SK-N-SH (cell line): ENCODE measurements at regions of chr10 and their contacts with region 1.

Region 1: DNA sequence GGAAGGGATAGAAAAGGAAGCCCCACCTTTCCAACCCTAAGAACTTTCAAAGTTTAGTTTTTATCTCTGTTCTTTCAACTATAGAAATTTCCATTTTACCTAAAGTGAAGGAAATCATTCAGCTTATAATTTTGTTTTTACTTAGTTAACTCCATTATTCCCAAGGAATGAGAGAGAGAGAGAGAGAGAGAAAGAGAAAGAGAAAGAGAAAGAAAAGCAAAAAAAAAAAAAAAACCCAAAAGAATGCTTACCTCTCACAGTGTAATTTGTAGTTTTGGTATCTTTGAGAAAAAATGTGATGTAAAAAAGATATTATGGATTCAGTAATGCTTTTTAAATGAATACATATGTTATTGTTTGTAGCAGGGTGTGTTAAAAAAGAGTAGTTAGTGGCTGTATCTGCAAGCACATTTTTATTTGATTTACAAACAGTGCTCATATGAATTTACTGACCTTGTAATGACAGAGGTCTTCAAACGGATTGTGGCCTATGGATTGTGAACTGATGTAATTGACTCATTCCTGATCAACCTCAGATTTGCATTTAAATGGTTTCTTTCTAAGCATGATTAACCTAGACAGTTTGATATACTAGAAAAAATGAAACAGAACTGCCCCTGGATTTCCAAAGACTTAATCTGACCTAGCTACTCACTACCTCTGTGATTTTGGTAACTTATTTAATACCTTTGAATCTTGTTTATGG is 64.9 kb downstream of the LCOR start:
- DNase-seq: no peak
- H3K4me3 ChIP-seq: no peak overlapping the region
- H3K27ac ChIP-seq: peak overlapping the region in 1 of 2 experiments; percentile 6; a peak in 1 of 4 replicates
- H3K4me1 ChIP-seq: peaks cover 0 to 4% of the 10 kb centered on the region in 2 experiments; a peak in 1 of 4 replicates
- H3K27me3 ChIP-seq: no peaks in the 10 kb centered on the region
- CTCF ChIP-seq: no peak
- EP300 ChIP-seq: no peak
- RAD21 ChIP-seq: no peak

Region 2: GRCh38 chr10:96910488-96911395 is 13.7 kb after region 1 on chr10:
- CTCF ChIA-PET with region 1: interaction called, 10 read pairs
- POLR2A ChIA-PET with region 1: no interaction called
- DNase-seq: peak; percentile 56
- H3K4me3 ChIP-seq: no peak overlapping the region; a peak in 1 of 4 replicates
- H3K27ac ChIP-seq: no peak overlapping the region
- H3K4me1 ChIP-seq: peaks cover 0 to 3% of the 10 kb centered on the region in 2 experiments; a peak in 1 of 4 replicates
- H3K27me3 ChIP-seq: no peaks in the 10 kb centered on the region
- CTCF ChIP-seq: peak; percentile 76
- EP300 ChIP-seq: no peak
- RAD21 ChIP-seq: peak; percentile 62